ENCODE measurements at regions of chr11 and their contacts with region 1.

Region 1: DNA sequence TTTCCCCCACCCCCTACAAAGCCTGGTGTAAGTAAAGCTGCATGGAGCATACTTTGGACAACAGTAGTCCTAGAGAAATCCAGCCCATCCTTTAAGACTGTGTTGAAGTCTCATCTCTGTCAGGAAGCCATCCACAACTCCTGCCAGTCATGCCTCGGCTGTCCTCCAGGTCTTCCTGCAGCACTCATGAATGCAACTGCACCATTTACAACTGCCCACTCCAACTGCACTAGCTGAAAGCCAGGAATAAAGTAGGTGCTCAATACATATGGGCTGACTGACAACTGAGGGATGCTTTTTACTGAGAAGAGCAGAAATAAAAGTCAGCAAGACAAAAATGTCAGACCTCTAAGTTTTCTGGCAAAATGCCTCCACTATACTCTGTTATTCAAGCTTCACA is 27.4 kb downstream of the IL18BP start:
- DNase-seq: no peak
- ATAC-seq: no peak
- H3K4me3 ChIP-seq: no peak overlapping the region
- H3K27ac ChIP-seq: no peak overlapping the region
- H3K4me1 ChIP-seq: peaks cover 0 to 16% (median 4%) of the 10 kb centered on the region in 4 donors
- H3K27me3 ChIP-seq: no peaks in the 10 kb centered on the region
- CTCF ChIP-seq: no peak
- POLR2A ChIP-seq: no peak

Region 2: DNA sequence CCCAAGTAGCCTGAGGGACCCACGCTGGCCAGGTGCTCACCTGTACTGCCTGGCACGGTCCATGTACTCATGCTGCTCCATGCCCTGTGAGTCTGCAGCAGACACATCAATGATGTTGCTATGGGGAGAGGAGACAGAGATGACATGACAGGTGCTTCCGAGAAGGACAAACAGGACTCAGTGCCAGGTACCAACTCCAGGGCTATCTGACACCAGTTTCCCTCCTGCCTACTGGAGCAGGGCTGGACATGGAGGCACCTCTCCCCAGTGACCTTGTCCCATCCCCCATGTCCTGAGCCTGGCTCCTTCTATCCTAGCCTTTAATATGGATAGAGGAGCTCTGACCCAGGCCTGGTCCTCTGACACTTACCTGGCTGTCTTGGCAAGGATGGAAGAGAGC is 72.7 kb after region 1 on chr11:
- intact Hi-C with region 1: loop called (anchors 5 kb)
- DNase-seq: no peak
- ATAC-seq: no peak
- H3K4me3 ChIP-seq: no peak overlapping the region
- H3K27ac ChIP-seq: no peak overlapping the region
- H3K4me1 ChIP-seq: peaks cover 0 to 18% (median 12%) of the 10 kb centered on the region in 4 donors
- H3K27me3 ChIP-seq: no peaks in the 10 kb centered on the region
- CTCF ChIP-seq: no peak
- POLR2A ChIP-seq: no peak

Region 3: GRCh38 chr11:72123117-72123653 is 97.1 kb after region 1 on chr11:
- intact Hi-C with region 1: no loop called
- DNase-seq: no peak
- ATAC-seq: no peak
- H3K4me3 ChIP-seq: no peak overlapping the region
- H3K27ac ChIP-seq: no peak overlapping the region
- H3K4me1 ChIP-seq: no peaks in the 10 kb centered on the region
- H3K27me3 ChIP-seq: no peaks in the 10 kb centered on the region
- CTCF ChIP-seq: no peak
- POLR2A ChIP-seq: no peak

Measured in right lobe of liver (tissue), 6 donors.